ENCODE measurements at regions of chr7 and their contacts with region 1.

Region 1: GRCh38 chr7:26151953-26152781 is at the start of gene NFE2L3:
- DNase-seq: peak; percentile 76 to 85 (median 78)
- H3K4me3 ChIP-seq: peak within 1 kb of the TSS; percentile 72
- H3K4me3 Mint-ChIP-seq: peak within 1 kb of the TSS; percentile 91 to 99 (median 93)
- H3K27ac ChIP-seq: peak within 1 kb of the TSS; percentile 57
- H3K27ac Mint-ChIP-seq: peak within 1 kb of the TSS; percentile 92 to 97 (median 94)
- H3K4me1 ChIP-seq: peaks cover 50% of the 10 kb centered on the region
- H3K4me1 Mint-ChIP-seq: peaks cover 48 to 59% (median 52%) of the 10 kb centered on the region in 3 donors
- H3K27me3 ChIP-seq: no peaks in the 10 kb centered on the region
- H3K27me3 Mint-ChIP-seq: no peaks in the 10 kb centered on the region
- total RNA-seq, gene NFE2L3: 43.5 to 47.4 TPM

Region 2: DNA sequence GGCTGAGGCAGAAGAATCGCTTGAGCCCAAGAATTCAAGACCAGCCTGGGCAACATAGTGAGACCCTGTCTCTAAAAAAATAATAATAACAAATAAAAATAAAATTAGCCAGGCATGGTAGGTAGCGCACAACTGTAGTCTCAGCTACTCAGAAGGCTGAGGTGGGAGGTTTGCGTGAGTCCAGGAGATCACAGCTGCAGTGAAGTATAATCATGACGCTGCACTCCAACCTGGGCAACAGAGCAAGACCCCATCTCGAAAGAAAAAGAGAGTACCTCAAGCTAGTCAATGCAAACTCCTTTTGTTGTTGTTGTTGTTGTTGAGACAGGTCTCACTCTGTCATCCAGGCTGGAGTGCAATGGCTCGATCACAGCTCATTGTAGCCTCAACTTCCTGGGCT is 34.2 kb before region 1 on chr7:
- CTCF ChIA-PET with region 1: no interaction called
- POLR2A ChIA-PET with region 1: no interaction called
- DNase-seq: no peak
- H3K4me3 ChIP-seq: no peak overlapping the region
- H3K4me3 Mint-ChIP-seq: no peak overlapping the region
- H3K27ac ChIP-seq: no peak overlapping the region
- H3K27ac Mint-ChIP-seq: no peak overlapping the region
- H3K4me1 ChIP-seq: no peaks in the 10 kb centered on the region
- H3K4me1 Mint-ChIP-seq: no peaks in the 10 kb centered on the region
- H3K27me3 ChIP-seq: no peaks in the 10 kb centered on the region
- H3K27me3 Mint-ChIP-seq: peaks cover 0 to 9% of the 10 kb centered on the region in 2 donors

Region 3: GRCh38 chr7:26187380-26188205 is 35.4 kb after region 1 on chr7:
- CTCF ChIA-PET with region 1: interaction called, 31 read pairs
- POLR2A ChIA-PET with region 1: interaction called, 10 read pairs
- DNase-seq: peak in 1 of 5 donors; percentile 22
- H3K4me3 ChIP-seq: no peak overlapping the region
- H3K4me3 Mint-ChIP-seq: peak overlapping the region in 1 of 7 donors; percentile 11
- H3K27ac ChIP-seq: no peak overlapping the region
- H3K27ac Mint-ChIP-seq: peak overlapping the region; percentile 36 to 87 (median 68)
- H3K4me1 ChIP-seq: peaks cover 44% of the 10 kb centered on the region
- H3K4me1 Mint-ChIP-seq: peaks cover 76 to 95% (median 90%) of the 10 kb centered on the region in 3 donors
- H3K27me3 ChIP-seq: no peaks in the 10 kb centered on the region
- H3K27me3 Mint-ChIP-seq: no peaks in the 10 kb centered on the region

Region 4: GRCh38 chr7:26193432-26194207 is 41.5 kb after region 1 on chr7:
- CTCF ChIA-PET with region 1: interaction called, 31 read pairs
- POLR2A ChIA-PET with region 1: interaction called, 55 read pairs
- DNase-seq: no peak
- H3K4me3 ChIP-seq: no peak overlapping the region
- H3K4me3 Mint-ChIP-seq: peak overlapping the region; percentile 70 to 99 (median 86)
- H3K27ac ChIP-seq: no peak overlapping the region
- H3K27ac Mint-ChIP-seq: peak overlapping the region; percentile 87 to 96 (median 92)
- H3K4me1 ChIP-seq: peaks cover 73% of the 10 kb centered on the region
- H3K4me1 Mint-ChIP-seq: peaks cover 86 to 95% (median 94%) of the 10 kb centered on the region in 3 donors
- H3K27me3 ChIP-seq: no peaks in the 10 kb centered on the region
- H3K27me3 Mint-ChIP-seq: peaks cover 0 to 1% of the 10 kb centered on the region in 2 donors

Region 5: DNA sequence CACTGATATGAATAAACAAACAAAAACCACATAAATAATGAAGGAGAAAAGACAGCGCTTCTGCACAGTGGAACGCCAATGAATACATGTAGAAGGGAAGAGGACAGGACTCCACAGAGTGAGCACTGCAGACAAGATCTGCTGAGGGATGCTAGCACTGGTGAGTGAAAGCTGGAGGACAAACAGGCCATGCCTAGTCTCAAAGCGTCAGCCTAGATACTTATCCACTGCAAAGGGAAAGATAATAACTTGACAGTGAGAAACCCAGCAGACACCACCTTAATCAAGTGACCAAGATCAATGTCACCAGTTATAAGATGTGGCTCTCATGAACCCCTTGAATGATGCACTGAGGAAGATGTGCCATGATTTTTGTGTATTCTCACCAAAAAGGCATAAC is 484.6 kb after region 1 on chr7:
- CTCF ChIA-PET with region 1: no interaction called
- POLR2A ChIA-PET with region 1: no interaction called
- DNase-seq: no peak
- H3K4me3 ChIP-seq: no peak overlapping the region
- H3K4me3 Mint-ChIP-seq: no peak overlapping the region
- H3K27ac ChIP-seq: no peak overlapping the region
- H3K27ac Mint-ChIP-seq: no peak overlapping the region
- H3K4me1 ChIP-seq: no peaks in the 10 kb centered on the region
- H3K4me1 Mint-ChIP-seq: peaks cover 5 to 6% (median 5%) of the 10 kb centered on the region in 3 donors
- H3K27me3 ChIP-seq: peaks cover 3% of the 10 kb centered on the region
- H3K27me3 Mint-ChIP-seq: peaks cover 1 to 13% of the 10 kb centered on the region in 2 donors

Measured in CD8-positive, alpha-beta memory T cell (primary cell).